ENCODE measurements at regions of chr6 and their contacts with region 1.

Region 1: DNA sequence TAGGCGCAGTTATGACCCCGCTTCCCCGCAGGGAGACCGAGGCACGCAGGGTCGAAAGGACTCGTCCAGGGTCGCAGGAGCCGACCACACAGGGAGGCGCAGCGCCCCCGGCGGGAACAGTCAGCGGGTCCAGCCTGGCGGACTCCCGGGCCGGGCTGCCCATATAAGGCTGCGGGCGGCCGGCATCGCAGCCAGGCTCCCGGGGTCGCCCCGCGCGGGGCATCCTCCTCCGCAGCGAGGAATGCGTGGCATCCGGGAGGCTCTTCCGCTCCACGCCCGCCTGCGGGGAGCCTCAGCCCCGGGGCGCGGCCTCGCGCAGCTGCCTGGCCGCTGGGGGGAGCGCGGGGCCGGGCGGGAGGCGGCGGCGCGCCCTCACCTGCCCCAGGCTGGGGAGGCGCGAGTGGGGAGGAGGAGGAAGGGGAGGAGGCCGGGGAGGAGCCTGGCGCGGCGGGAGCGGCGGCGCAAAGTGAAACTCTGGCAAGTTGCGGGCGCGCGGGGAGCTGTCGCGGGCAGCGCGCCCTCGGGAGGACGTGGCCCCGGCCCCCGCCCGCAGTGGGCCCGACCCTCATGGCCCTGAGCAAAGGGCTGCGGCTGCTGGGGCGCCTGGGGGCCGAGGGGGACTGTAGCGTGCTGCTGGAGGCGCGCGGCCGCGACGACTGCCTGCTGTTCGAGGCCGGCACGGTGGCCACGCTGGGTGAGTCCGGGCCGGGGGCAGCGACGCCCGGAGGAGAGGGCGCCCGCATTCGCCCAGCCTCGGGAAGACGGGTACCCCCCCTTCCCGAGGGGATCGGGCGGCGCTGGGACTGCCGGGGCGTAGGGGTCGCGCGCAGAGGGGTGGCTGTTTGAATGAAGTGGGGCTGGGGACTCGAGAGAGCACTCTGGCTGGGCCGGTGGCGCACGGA is at the start of gene SYNJ2:
- DNase-seq: peak; percentile 46 to 79
- H3K4me3 ChIP-seq: peak within 1 kb of the TSS; percentile 86
- H3K27ac ChIP-seq: 0 out of 2 replicates have a peak within 1 kb of the TSS, but pooled peaks have one; percentile 21
- H3K4me1 ChIP-seq: peaks cover 46% of the 10 kb centered on the region
- H3K27me3 ChIP-seq: no peaks in the 10 kb centered on the region
- CTCF ChIP-seq: peak; percentile 48; the same call in 1 of the 2 replicates
- total RNA-seq, gene SYNJ2: 30.3 and 39.4 TPM in 2 replicates

Region 2: GRCh38 chr6:158040051-158040803 is 58.6 kb after region 1 on chr6:
- CTCF ChIA-PET with region 1: no interaction called
- POLR2A ChIA-PET with region 1: no interaction called
- intact Hi-C with region 1: loop called (anchors 1 kb)
- DNase-seq: peak; percentile 60 to 97
- H3K4me3 ChIP-seq: peak overlapping the region; percentile 43; the same call in 1 of the 2 replicates
- H3K27ac ChIP-seq: peak overlapping the region; percentile 90
- H3K4me1 ChIP-seq: peaks cover 59% of the 10 kb centered on the region
- H3K27me3 ChIP-seq: no peaks in the 10 kb centered on the region
- CTCF ChIP-seq: no peak

Measured in PC-9 (cell line).